Activated CD4-positive, alpha-beta T cell treated with anti-CD3 and anti-CD28 coated beads for 36 hours (primary cell): ENCODE measurements at regions of chr3 and their contacts with region 1.

Region 1: GRCh38 chr3:87298111-87298718 is 21.8 kb upstream of the POU1F1 start:
- DNase-seq: no peak
- ATAC-seq: peak; percentile 44
- H3K4me3 Mint-ChIP-seq: no peak overlapping the region
- H3K27ac Mint-ChIP-seq: no peak overlapping the region
- H3K4me1 Mint-ChIP-seq: no peaks in the 10 kb centered on the region
- H3K27me3 Mint-ChIP-seq: no peaks in the 10 kb centered on the region

Region 2: GRCh38 chr3:87260270-87260669 is 37.9 kb before region 1 on chr3:
- CTCF ChIA-PET with region 1: interaction called, 13 read pairs
- POLR2A ChIA-PET with region 1: no interaction called
- intact Hi-C with region 1: no loop called
- DNase-seq: peak; percentile 62
- ATAC-seq: peak; percentile 44
- H3K4me3 Mint-ChIP-seq: no peak overlapping the region
- H3K27ac Mint-ChIP-seq: no peak overlapping the region
- H3K4me1 Mint-ChIP-seq: peaks cover 3% of the 10 kb centered on the region
- H3K27me3 Mint-ChIP-seq: no peaks in the 10 kb centered on the region

Region 3: DNA sequence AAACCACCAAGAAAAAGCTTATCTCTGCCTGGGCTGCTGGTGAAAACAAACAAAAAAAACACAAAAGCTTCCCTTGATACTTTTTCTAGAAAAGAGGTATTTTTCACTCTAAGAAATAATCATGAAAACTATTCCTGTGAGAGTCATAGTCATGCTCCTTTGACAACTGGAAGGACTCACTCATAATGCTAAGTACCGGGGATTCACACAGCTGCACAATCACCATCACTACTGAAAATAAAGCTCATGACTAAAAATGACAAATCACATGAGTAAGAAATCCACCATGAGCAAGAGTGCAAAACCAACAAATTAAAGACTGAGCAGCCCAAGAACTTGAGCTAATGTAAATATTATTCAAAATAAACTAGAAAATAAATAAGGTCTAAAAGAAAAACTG is 11.2 kb before region 1 on chr3:
- CTCF ChIA-PET with region 1: interaction called, 22 read pairs
- POLR2A ChIA-PET with region 1: no interaction called
- intact Hi-C with region 1: no loop called
- DNase-seq: no peak
- ATAC-seq: peak; percentile 80
- H3K4me3 Mint-ChIP-seq: no peak overlapping the region
- H3K27ac Mint-ChIP-seq: no peak overlapping the region
- H3K4me1 Mint-ChIP-seq: peaks cover 3% of the 10 kb centered on the region
- H3K27me3 Mint-ChIP-seq: peaks cover 3% of the 10 kb centered on the region

Region 4: GRCh38 chr3:87503900-87504508 is 205.8 kb after region 1 on chr3:
- CTCF ChIA-PET with region 1: interaction called, 16 read pairs
- POLR2A ChIA-PET with region 1: no interaction called
- intact Hi-C with region 1: loop called (anchors 1 to 2 kb)
- DNase-seq: peak; percentile 16
- ATAC-seq: no peak
- H3K4me3 Mint-ChIP-seq: no peak overlapping the region
- H3K27ac Mint-ChIP-seq: no peak overlapping the region
- H3K4me1 Mint-ChIP-seq: no peaks in the 10 kb centered on the region
- H3K27me3 Mint-ChIP-seq: no peaks in the 10 kb centered on the region

Region 5: DNA sequence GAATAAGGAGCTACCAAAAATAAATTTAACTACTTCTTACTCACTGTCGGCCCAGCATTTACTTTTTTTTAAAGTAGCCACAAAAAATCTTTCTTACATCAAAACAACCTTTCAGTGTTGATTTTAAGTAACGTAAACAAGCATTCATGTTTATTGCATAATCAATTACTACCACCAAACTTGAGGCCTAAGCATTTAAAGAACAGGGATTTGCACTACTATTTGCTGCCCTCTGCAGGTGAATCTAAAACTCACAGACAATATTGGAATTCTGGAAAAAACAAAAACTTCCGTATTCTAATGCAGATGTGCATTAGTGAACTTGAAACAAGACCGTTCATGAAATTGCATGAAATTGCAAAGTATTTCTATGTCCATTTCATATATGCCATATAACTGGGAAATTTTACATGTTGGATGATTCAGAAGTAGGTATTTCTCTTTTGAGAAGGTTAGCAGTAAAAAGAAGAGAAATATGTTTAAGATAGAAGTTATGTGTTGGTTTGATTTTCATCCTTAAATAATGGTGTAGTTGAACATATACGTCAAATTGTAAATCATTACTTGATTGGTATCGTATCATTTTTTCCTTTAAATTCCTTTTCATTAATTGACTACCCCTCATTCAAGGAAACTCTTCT is 705.0 kb after region 1 on chr3:
- CTCF ChIA-PET with region 1: interaction called, 4 read pairs
- POLR2A ChIA-PET with region 1: no interaction called
- intact Hi-C with region 1: loop called (anchors 1 to 2 kb)
- DNase-seq: no peak
- ATAC-seq: no peak
- H3K4me3 Mint-ChIP-seq: no peak overlapping the region
- H3K27ac Mint-ChIP-seq: no peak overlapping the region
- H3K4me1 Mint-ChIP-seq: peaks cover 7% of the 10 kb centered on the region
- H3K27me3 Mint-ChIP-seq: no peaks in the 10 kb centered on the region

Region 6: GRCh38 chr3:88180398-88180999 is 882.3 kb after region 1 on chr3:
- CTCF ChIA-PET with region 1: interaction called, 3 read pairs
- POLR2A ChIA-PET with region 1: no interaction called
- intact Hi-C with region 1: loop called in 1 of 2 experiments (anchors 2 kb)
- DNase-seq: peak; percentile 30
- ATAC-seq: peak; percentile 66
- H3K4me3 Mint-ChIP-seq: no peak overlapping the region
- H3K27ac Mint-ChIP-seq: no peak overlapping the region
- H3K4me1 Mint-ChIP-seq: no peaks in the 10 kb centered on the region
- H3K27me3 Mint-ChIP-seq: no peaks in the 10 kb centered on the region

Region 7: DNA sequence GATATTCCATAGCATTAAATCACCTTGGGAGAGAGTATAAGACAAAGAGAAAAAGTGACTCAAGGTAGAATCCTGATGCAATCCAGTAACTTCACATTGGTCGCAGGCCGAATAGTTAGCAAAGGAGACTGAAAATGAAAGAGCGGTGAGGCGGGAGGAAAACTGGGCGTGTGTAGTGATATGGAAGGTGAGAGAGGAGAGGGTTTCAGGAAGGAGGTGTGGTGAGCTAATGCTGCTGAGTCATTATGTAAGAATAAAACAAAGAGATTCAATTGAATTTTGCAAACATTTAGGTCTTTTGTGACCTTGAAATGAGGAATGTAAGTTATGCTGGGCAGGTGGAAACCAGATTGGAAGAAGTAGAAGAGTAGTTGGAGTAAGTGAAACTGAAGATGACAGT is 1086.9 kb after region 1 on chr3:
- CTCF ChIA-PET with region 1: no interaction called
- POLR2A ChIA-PET with region 1: no interaction called
- intact Hi-C with region 1: no loop called
- DNase-seq: peak; percentile 7
- ATAC-seq: no peak
- H3K4me3 Mint-ChIP-seq: no peak overlapping the region
- H3K27ac Mint-ChIP-seq: no peak overlapping the region
- H3K4me1 Mint-ChIP-seq: peaks cover 12% of the 10 kb centered on the region
- H3K27me3 Mint-ChIP-seq: no peaks in the 10 kb centered on the region